Colonic mucosa (tissue), 4 donors: ENCODE measurements at regions of chr11 and their contacts with region 1.

Region 1: DNA sequence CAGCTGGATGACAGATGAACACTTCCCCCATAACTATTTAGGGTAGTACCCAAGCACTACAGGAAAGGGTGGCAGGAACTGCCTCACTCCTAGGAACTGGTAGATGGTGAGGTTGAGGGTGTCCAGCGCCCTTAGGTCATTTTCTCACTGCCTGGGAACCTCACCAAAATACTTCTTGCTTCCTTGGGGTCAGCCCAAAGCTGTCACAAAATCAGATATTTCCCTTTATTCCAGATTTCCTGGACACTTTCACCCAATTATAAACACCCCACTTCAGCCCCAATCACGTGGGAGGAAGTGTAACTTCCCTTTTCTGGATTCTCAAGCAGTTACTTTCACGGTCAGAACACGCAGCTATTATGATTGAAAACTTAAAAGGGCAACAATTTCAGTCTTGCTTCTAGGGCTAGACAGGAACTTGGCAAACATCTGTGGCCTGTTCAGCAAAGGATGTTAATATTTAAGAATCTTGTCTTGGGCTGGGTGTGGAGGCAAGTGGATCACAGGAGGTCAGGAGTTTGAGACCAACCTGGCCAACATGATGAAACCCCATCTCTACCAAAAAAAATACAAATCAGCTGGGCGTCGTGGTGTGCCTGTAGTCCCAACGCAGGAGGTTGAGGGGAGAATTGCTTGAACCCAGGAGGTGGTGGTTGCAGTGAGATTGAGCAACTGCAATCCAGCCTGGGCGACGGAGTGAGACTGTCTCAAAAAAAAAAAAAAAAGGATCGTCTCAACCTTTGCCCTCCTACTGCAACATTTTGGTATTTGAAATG is 4.0 kb downstream of the FTH1 start:
- DNase-seq: no peak
- H3K4me3 ChIP-seq: no peak overlapping the region
- H3K27ac ChIP-seq: peak overlapping the region; percentile 98
- H3K4me1 ChIP-seq: no peaks in the 10 kb centered on the region
- H3K27me3 ChIP-seq: no peaks in the 10 kb centered on the region
- CTCF ChIP-seq: no peak

Region 2: DNA sequence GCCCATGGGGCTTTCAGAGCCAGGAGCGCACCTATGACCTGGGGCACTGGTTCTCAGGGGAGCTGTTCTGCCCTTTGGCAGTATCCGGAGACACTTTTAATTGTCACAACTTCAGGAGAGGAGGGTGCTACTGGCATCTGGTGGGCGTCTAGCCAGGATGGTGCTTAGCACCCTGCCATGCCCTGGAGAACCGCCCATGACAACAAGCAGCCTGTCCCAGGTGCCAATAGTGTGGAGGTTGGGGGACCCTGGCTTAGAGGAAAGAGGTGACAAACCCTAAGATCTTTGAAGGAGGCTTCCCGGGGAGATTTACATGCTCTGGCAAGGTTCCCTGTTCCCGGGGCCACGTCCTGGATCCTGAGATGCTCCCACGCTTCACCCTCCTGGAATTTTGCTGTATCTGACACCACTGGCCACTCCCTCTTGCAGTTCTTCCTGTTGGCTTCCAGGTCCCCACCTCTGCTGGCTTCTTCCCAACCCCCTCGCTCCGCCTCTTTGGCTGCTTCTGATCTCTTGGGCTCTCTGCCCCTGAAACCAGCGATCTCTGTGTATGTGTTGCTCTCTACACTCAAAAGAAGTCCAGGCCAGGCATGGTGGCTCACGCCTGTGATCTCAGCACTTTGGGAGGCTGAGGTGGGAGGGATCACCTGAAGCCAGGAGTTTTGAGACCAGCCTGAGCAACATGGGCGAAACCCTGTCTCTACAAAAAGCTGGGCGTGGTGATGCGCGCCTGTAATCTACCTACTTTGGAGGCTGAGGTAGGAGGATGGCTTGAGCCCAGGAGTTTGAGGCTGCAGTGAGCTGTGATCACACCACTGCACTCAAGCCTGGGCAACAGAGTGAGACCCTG is 103.2 kb before region 1 on chr11:
- intact Hi-C with region 1: no loop called
- DNase-seq: peak; percentile 73
- H3K4me3 ChIP-seq: no peak overlapping the region
- H3K27ac ChIP-seq: no peak overlapping the region
- H3K4me1 ChIP-seq: no peaks in the 10 kb centered on the region
- H3K27me3 ChIP-seq: no peaks in the 10 kb centered on the region
- CTCF ChIP-seq: no peak

Region 3: GRCh38 chr11:62025487-62026105 is 62.1 kb after region 1 on chr11:
- intact Hi-C with region 1: no loop called
- DNase-seq: peak; percentile 85
- H3K4me3 ChIP-seq: no peak overlapping the region
- H3K27ac ChIP-seq: peak overlapping the region; percentile 72
- H3K4me1 ChIP-seq: no peaks in the 10 kb centered on the region
- H3K27me3 ChIP-seq: no peaks in the 10 kb centered on the region
- CTCF ChIP-seq: no peak

Region 4: GRCh38 chr11:62054484-62055121 is 91.1 kb after region 1 on chr11:
- intact Hi-C with region 1: loop called (anchors 5 kb)
- DNase-seq: peak; percentile 60
- H3K4me3 ChIP-seq: no peak overlapping the region
- H3K27ac ChIP-seq: no peak overlapping the region
- H3K4me1 ChIP-seq: no peaks in the 10 kb centered on the region
- H3K27me3 ChIP-seq: no peaks in the 10 kb centered on the region
- CTCF ChIP-seq: peak; percentile 42